CD14-positive monocyte (primary cell): ENCODE measurements at regions of chr12 and their contacts with region 1.

Region 1: GRCh38 chr12:6944381-6945186 is 762 bp downstream of the C12orf57 start:
- DNase-seq: peak; percentile 82 to 90 (median 90)
- H3K4me3 ChIP-seq: peak overlapping the region; percentile 3 to 76 (median 48)
- H3K4me3 Mint-ChIP-seq: peak overlapping the region; percentile 82 to 91
- H3K27ac ChIP-seq: peak overlapping the region; percentile 76 to 89
- H3K27ac Mint-ChIP-seq: peak overlapping the region; percentile 94 to 99 (median 98)
- H3K4me1 ChIP-seq: peaks cover 62 to 68% of the 10 kb centered on the region in 2 donors
- H3K4me1 Mint-ChIP-seq: peaks cover 65% of the 10 kb centered on the region
- H3K27me3 ChIP-seq: no peaks in the 10 kb centered on the region
- H3K27me3 Mint-ChIP-seq: peaks cover 0 to 2% (median 0%) of the 10 kb centered on the region in 3 donors
- CTCF ChIP-seq: peak; percentile 81

Region 2: DNA sequence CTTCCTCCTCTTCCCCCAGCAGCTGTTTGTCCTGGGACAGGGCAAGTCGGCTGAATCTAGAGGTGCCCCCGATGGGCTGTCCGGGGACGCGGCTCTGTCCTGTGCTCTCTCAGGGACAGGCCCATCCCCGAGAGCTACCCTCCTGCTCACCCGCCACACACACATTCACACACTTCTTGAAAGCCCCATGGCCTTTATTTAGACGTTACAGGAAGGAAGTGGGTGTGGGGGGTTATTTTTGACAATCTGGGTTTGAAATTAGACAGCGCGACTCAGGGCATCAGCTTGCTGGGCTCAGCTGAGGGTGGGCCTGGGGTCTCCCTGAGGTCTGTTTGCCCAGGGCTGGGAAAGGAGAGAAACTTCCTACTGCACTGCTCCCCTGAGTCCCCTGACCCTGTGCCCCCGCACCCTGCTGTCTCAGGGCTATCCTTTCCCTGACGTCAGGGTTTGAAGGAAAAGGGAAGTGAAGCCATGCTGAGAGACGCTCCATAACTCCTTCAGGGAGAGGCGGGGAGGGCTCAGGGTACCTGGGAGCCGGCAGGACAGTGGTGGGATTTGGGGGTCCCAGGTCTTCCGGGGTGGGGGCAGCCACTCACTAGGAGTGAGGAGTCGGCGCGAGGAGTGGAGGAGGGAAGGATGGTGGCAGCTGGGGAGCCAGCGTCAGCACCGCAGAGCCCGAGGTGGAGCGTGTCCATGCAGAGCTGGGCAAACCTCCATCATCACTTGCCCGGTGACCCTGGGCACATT is 14.6 kb after region 1 on chr12:
- intact Hi-C with region 1: loop called (anchors 1 to 2 kb)
- DNase-seq: peak; percentile 72 to 85 (median 77)
- H3K4me3 ChIP-seq: peak overlapping the region in 2 of 3 experiments; percentile 19 to 98
- H3K4me3 Mint-ChIP-seq: peak overlapping the region; percentile 78 to 88
- H3K27ac ChIP-seq: peak overlapping the region; percentile 87 to 95
- H3K27ac Mint-ChIP-seq: peak overlapping the region; percentile 96 to 99 (median 99)
- H3K4me1 ChIP-seq: peaks cover 93 to 99% of the 10 kb centered on the region in 2 donors
- H3K4me1 Mint-ChIP-seq: peaks cover 93% of the 10 kb centered on the region
- H3K27me3 ChIP-seq: no peaks in the 10 kb centered on the region
- H3K27me3 Mint-ChIP-seq: peaks cover 0 to 9% (median 0%) of the 10 kb centered on the region in 3 donors
- CTCF ChIP-seq: no peak